CD4-positive, alpha-beta T cell (primary cell): ENCODE measurements at regions of chr1 and their contacts with region 1.

Region 1: GRCh38 chr1:156096640-156097391 is 14.6 kb upstream of the MEX3A start:
- DNase-seq: peak; percentile 73 to 99 (median 83)
- ATAC-seq: peak; percentile 78
- H3K4me3 ChIP-seq: peak overlapping the region; percentile 21
- H3K4me3 Mint-ChIP-seq: peak overlapping the region; percentile 26
- H3K27ac ChIP-seq: peak overlapping the region; percentile 51 to 89
- H3K27ac Mint-ChIP-seq: peak overlapping the region; percentile 82
- H3K4me1 ChIP-seq: peaks cover 39% of the 10 kb centered on the region
- H3K4me1 Mint-ChIP-seq: peaks cover 39% of the 10 kb centered on the region
- H3K27me3 ChIP-seq: no peaks in the 10 kb centered on the region
- H3K27me3 Mint-ChIP-seq: peaks cover 4% of the 10 kb centered on the region
- CTCF ChIP-seq: peak; percentile 93

Region 2: GRCh38 chr1:156114101-156114916 is 17.5 kb after region 1 on chr1 and contains the start of gene LMNA:
- CTCF ChIA-PET with region 1: interaction called, 101 read pairs
- POLR2A ChIA-PET with region 1: interaction called, 23 read pairs
- intact Hi-C with region 1: no loop called
- DNase-seq: peak in 13 of 14 experiments; percentile 51 to 93 (median 68)
- ATAC-seq: peak; percentile 77
- H3K4me3 ChIP-seq: peak within 1 kb of the TSS; percentile 84
- H3K4me3 Mint-ChIP-seq: peak within 1 kb of the TSS; percentile 99
- H3K27ac ChIP-seq: peak within 1 kb of the TSS; percentile 50 to 64
- H3K27ac Mint-ChIP-seq: peak within 1 kb of the TSS; percentile 89
- H3K4me1 ChIP-seq: peaks cover 55% of the 10 kb centered on the region
- H3K4me1 Mint-ChIP-seq: peaks cover 31% of the 10 kb centered on the region
- H3K27me3 ChIP-seq: peaks cover 24 to 28% of the 10 kb centered on the region in 2 experiments
- H3K27me3 Mint-ChIP-seq: peaks cover 46% of the 10 kb centered on the region
- CTCF ChIP-seq: no peak
- total RNA-seq, gene LMNA: 435 to 455 TPM

Region 3: GRCh38 chr1:156129706-156130581 is 33.1 kb after region 1 on chr1:
- CTCF ChIA-PET with region 1: interaction called, 194 read pairs
- POLR2A ChIA-PET with region 1: interaction called, 18 read pairs
- intact Hi-C with region 1: loop called (anchors 1 kb)
- DNase-seq: peak; percentile 60 to 87 (median 72)
- ATAC-seq: no peak
- H3K4me3 ChIP-seq: no peak overlapping the region
- H3K4me3 Mint-ChIP-seq: peak overlapping the region; percentile 60
- H3K27ac ChIP-seq: no peak overlapping the region
- H3K27ac Mint-ChIP-seq: peak overlapping the region; percentile 78
- H3K4me1 ChIP-seq: peaks cover 58% of the 10 kb centered on the region
- H3K4me1 Mint-ChIP-seq: peaks cover 50% of the 10 kb centered on the region
- H3K27me3 ChIP-seq: no peaks in the 10 kb centered on the region
- H3K27me3 Mint-ChIP-seq: no peaks in the 10 kb centered on the region
- CTCF ChIP-seq: peak; percentile 92

Region 4: DNA sequence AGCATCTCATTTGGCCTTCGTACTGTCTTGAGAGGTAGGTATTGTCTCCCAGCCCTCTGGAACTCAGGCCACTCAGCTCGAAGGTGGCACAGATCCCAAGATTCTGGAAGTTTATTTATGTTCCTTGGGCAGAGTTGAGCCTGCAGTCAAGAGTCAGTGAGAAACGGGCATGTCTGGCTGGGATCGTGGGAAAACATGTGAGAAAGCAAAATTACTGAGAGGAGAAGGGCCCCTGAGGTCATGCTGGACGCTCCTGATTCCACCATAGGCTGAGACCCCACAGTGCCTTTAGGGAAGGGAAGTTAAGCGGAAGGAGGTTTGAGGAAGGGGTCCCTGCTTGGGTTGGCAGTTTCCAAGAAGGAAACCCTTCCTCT is 44.0 kb after region 1 on chr1:
- CTCF ChIA-PET with region 1: interaction called, 22 read pairs
- POLR2A ChIA-PET with region 1: no interaction called
- intact Hi-C with region 1: no loop called
- DNase-seq: no peak
- ATAC-seq: peak; percentile 1
- H3K4me3 ChIP-seq: no peak overlapping the region
- H3K4me3 Mint-ChIP-seq: peak overlapping the region; percentile 25
- H3K27ac ChIP-seq: no peak overlapping the region
- H3K27ac Mint-ChIP-seq: peak overlapping the region; percentile 5
- H3K4me1 ChIP-seq: peaks cover 2% of the 10 kb centered on the region
- H3K4me1 Mint-ChIP-seq: peaks cover 2% of the 10 kb centered on the region
- H3K27me3 ChIP-seq: no peaks in the 10 kb centered on the region
- H3K27me3 Mint-ChIP-seq: peaks cover under 1% of the 10 kb centered on the region
- CTCF ChIP-seq: no peak

Region 5: DNA sequence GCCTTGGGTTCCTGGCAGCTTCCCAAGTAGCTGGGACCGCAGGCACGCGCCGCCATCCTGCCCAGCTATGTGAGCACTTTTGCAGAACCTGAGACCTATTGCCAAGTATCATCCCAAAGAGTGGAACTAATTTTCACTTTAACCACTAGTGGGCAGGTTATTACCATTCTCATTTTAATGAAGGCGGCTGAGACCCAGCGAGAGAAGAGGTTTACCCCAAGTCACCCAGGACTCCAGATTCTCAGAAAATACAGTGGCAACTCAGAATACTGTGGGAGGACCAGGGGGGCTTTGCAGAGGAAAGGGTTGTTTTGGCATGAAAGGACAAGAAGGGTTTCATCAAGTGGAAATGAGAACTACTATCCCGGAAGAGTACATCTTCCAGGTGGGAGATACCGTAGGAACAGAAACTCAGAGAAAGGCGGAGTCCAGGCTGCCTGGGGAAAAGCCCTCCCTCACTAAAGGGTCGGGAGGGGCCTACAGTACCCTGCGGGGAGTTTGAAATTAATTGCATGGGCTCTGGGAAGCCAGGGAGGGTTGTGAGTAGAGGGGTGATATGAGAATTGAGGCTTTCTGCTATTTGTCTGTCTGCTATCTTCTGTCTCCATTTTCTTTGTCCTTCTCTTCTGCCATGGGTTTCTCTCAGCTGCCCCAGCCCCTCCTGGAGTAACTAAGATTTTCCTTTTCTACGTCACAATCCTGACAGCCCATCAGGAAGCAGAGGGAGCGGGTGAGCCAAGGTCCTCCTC is 49.4 kb after region 1 on chr1:
- CTCF ChIA-PET with region 1: interaction called, 22 read pairs
- POLR2A ChIA-PET with region 1: no interaction called
- intact Hi-C with region 1: no loop called
- DNase-seq: peak in 8 of 14 experiments; percentile 25 to 83 (median 47)
- ATAC-seq: peak; percentile 76
- H3K4me3 ChIP-seq: no peak overlapping the region
- H3K4me3 Mint-ChIP-seq: peak overlapping the region; percentile 60
- H3K27ac ChIP-seq: no peak overlapping the region
- H3K27ac Mint-ChIP-seq: peak overlapping the region; percentile 71
- H3K4me1 ChIP-seq: peaks cover 30% of the 10 kb centered on the region
- H3K4me1 Mint-ChIP-seq: peaks cover 24% of the 10 kb centered on the region
- H3K27me3 ChIP-seq: no peaks in the 10 kb centered on the region
- H3K27me3 Mint-ChIP-seq: peaks cover 5% of the 10 kb centered on the region
- CTCF ChIP-seq: peak; percentile 73